Activated naive CD4-positive, alpha-beta T cell treated with anti-CD3 and anti-CD28 coated beads for 36 hours (primary cell): ENCODE measurements at regions of chr18 and their contacts with region 1.

Region 1: DNA sequence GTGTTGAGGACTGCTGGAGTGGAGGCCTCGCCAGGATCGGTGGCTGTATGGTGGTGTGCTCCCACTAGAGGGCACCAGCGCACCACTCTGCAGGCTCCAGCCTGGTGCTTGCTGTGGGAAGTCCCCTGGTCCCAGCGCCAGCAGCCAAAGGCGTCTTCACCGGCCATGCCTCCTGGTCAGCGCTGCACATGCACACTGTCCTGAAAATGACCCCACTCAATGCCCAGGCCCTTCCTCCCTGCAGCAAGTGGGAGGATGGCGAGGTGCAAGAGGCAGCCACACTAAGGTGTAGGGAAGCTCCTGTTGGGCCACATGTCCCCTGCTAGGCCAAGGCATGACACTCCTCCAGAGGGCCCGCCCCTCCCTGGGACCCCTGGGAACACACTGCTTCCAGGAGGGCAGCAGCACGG is 136.5 kb downstream of the CTIF start:
- DNase-seq: peak; percentile 87
- H3K4me3 Mint-ChIP-seq: no peak overlapping the region
- H3K27ac Mint-ChIP-seq: no peak overlapping the region
- H3K4me1 Mint-ChIP-seq: no peaks in the 10 kb centered on the region
- H3K27me3 Mint-ChIP-seq: no peaks in the 10 kb centered on the region

Region 2: DNA sequence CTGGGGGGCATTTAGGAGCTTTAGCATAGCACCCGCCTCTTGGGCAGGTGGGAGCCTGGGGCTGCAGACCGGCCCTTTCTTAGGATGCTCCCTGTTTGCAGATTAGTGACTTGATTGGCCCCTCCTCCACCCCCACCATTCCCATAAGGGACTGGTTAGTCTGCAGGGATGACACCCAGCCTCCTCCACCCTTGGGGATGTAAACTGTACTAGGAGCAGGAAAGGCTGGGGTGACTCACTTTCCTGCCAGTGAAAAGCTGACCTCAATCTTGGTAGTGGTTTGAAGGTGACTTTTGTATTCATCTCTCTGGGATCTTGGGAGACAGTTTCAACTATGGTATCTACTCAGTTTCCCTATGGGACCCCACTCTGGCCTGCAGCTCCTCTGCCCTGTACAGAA is 112.3 kb before region 1 on chr18:
- CTCF ChIA-PET with region 1: no interaction called
- intact Hi-C with region 1: no loop called
- DNase-seq: no peak
- H3K4me3 Mint-ChIP-seq: no peak overlapping the region
- H3K27ac Mint-ChIP-seq: no peak overlapping the region
- H3K4me1 Mint-ChIP-seq: no peaks in the 10 kb centered on the region
- H3K27me3 Mint-ChIP-seq: peaks cover 3% of the 10 kb centered on the region

Region 3: GRCh38 chr18:48600456-48601090 is 74.8 kb before region 1 on chr18:
- CTCF ChIA-PET with region 1: no interaction called
- intact Hi-C with region 1: no loop called
- DNase-seq: no peak
- H3K4me3 Mint-ChIP-seq: no peak overlapping the region
- H3K27ac Mint-ChIP-seq: no peak overlapping the region
- H3K4me1 Mint-ChIP-seq: no peaks in the 10 kb centered on the region
- H3K27me3 Mint-ChIP-seq: no peaks in the 10 kb centered on the region

Region 4: DNA sequence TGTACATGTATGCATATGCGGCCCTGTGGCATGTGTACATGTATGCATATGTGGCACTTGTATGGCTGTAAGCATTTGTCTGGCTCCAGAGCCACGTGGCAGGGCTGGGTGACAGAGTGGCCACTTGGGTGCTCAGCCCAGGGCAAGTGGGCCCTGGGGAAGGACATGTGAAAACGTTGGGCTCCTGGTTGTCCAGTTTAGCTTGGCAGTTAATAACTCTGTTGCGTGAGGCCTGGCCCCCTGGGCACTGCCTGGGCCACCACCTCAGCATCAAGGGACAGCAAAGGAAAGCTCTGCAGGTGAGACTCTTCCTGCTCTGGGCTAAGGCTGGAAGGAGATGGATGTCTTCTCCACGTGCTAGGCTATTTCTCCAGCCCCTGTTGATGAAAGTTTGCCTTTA is 16.6 kb before region 1 on chr18:
- CTCF ChIA-PET with region 1: no interaction called
- intact Hi-C with region 1: no loop called
- DNase-seq: no peak
- H3K4me3 Mint-ChIP-seq: no peak overlapping the region
- H3K27ac Mint-ChIP-seq: no peak overlapping the region
- H3K4me1 Mint-ChIP-seq: no peaks in the 10 kb centered on the region
- H3K27me3 Mint-ChIP-seq: no peaks in the 10 kb centered on the region

Region 5: GRCh38 chr18:48975649-48976204 is 300.4 kb after region 1 on chr18:
- CTCF ChIA-PET with region 1: no interaction called
- intact Hi-C with region 1: loop called (anchors 5 kb)
- DNase-seq: peak; percentile 63
- H3K4me3 Mint-ChIP-seq: peak overlapping the region; percentile 24
- H3K27ac Mint-ChIP-seq: no peak overlapping the region
- H3K4me1 Mint-ChIP-seq: peaks cover 5% of the 10 kb centered on the region
- H3K27me3 Mint-ChIP-seq: peaks cover 21% of the 10 kb centered on the region

Region 6: DNA sequence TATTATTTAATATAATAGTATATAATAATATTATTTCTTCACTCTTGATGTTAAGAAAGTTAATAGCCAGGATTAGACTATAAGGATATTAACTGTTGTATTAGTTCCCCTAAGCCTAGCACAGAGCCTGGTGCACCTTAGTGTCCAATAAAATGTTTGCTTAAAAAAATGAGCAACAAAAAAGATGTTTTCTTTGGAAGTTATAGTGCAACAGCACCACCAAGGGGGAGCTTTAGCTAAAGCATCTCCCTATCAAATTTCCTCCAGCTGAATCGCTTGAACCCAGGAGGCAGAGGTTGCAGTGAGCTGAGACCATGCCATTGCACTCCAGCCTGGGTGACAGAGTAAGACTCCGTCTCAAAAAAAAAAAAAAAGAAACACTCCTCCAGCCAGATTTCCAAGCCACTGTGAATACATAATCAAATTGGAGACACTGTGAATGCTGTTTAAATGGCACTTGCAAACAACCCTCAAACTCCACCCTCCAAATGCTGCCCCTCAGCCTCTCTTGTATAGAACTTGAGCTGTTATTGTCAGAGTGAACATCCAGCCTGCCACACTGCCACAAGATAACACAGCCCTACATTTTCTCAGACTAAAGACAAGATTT is 563.2 kb after region 1 on chr18:
- CTCF ChIA-PET with region 1: no interaction called
- intact Hi-C with region 1: loop called (anchors 1 kb)
- DNase-seq: no peak
- H3K4me3 Mint-ChIP-seq: no peak overlapping the region
- H3K27ac Mint-ChIP-seq: no peak overlapping the region
- H3K4me1 Mint-ChIP-seq: no peaks in the 10 kb centered on the region
- H3K27me3 Mint-ChIP-seq: no peaks in the 10 kb centered on the region

Region 7: DNA sequence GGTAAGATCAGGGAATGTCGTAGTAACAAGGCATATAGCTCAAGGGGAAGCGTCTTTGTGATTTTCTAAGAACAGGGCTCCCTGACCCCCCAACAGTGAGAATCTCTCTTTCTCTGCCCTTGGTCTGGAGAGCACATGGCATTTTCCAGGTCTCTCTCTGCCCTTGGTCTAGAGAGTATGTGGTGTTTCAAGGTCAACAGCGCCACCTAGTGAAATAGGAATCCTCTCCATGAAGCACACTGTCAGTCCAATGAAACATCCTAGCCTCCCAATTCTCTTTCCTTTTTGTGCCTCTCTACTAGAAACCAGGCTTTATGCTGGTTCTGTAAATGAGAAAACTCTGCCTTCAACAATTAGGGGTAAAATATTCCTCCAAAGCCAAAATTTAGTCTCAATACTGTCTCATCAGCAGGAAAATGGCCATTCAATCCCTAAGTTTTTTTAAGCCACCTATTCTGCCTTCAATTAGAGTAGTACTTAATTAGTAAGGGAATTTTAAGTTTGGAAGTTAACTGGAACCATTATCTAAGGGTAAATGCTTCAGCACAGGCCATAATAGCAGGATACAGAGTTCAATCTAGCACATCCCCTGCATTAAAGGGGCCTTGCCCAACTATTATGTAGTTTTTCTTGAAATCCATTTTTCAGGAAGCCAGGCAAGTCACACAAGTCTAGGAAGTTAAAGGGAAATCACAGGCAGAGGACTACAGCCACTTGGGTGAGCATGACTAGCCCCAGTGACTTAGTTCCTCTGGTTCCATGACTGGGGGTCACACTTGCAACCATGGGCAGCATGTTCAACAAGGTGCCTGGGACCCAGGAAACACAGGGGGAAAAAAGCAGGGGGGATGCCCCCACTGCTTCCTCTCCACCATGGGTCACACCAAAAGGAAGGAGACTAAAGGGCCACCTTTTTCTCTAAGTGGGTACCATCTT is 772.7 kb after region 1 on chr18:
- CTCF ChIA-PET with region 1: interaction called, 5 read pairs
- intact Hi-C with region 1: loop called (anchors 1 kb)
- DNase-seq: peak; percentile 53
- H3K4me3 Mint-ChIP-seq: no peak overlapping the region
- H3K27ac Mint-ChIP-seq: no peak overlapping the region
- H3K4me1 Mint-ChIP-seq: peaks cover 6% of the 10 kb centered on the region
- H3K27me3 Mint-ChIP-seq: no peaks in the 10 kb centered on the region

Region 8: DNA sequence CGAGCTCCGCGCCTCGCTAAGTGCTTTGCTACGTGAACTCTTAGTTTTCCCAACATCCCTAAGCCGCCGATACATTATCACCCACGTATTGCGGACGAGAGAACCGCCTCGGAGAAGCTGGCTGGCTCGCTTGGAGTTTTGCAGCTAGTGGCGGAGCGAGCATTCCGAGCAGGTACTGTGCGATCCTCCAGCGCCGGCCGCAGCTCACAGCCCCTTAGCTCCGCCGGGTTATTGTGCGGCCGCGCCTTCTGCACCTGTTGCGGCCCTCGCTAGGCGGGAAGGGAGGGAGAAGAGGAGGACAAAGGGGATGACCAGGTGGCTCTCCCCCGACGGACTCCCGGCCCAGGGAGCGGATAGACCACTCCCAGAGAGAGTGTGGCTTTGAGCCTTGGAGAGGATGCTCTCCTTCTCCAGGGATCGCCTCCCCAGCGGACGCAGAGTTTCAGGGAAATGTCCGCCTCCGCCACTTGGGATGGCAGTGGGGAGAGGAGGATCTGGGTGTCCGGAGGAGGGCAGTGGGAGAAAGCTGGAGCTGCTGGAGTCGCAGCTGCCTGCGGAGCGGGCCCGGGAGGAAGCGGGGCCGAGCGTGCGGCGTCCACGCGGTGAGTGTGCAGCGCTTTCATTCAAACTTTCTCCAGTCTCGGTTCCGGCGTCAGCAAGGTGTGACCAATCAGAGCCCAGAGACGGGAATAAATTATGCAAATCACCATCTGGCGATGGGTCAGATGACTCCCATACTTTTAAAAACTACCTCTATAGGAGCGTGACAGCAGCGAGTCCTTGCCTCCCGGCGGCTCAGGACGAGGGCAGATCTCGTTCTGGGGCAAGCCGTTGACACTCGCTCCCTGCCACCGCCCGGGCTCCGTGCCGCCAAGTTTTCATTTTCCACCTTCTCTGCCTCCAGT is 886.2 kb after region 1 on chr18 and contains the start of gene LIPG:
- CTCF ChIA-PET with region 1: no interaction called
- intact Hi-C with region 1: loop called (anchors 5 kb)
- DNase-seq: peak; percentile 76
- H3K4me3 Mint-ChIP-seq: peak within 1 kb of the TSS; percentile 66
- H3K27ac Mint-ChIP-seq: no peak within 1 kb of the TSS
- H3K4me1 Mint-ChIP-seq: peaks cover 31% of the 10 kb centered on the region
- H3K27me3 Mint-ChIP-seq: peaks cover 65% of the 10 kb centered on the region
- total RNA-seq, gene LIPG: 0.22 to 0.45 TPM

Region 9: DNA sequence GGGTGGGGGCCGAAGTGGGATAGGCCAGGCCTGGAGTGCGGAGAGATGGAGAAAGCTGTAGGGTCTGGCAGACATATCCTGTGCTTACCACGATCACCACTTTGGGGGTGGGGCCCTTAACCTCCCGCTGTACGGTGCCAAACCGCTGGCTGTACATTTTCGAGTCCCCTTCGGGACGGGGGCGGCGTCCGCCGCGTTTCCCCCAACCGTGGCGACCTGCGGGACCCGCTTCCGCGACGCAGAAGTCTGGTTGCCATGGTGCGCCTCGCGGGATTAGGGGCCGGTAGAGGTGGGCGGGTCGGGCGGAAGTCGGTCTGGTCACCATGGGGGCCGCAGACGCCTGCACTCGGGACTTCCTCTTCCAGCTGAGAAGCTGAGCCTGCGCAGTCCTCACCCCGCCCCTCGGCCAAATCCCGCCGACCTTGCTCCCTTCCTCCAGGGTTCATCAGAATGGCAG is 1590.9 kb after region 1 on chr18 and contains the start of gene CFAP53:
- CTCF ChIA-PET with region 1: no interaction called
- intact Hi-C with region 1: loop called (anchors 10 kb)
- DNase-seq: peak; percentile 90
- H3K4me3 Mint-ChIP-seq: peak within 1 kb of the TSS; percentile 76
- H3K27ac Mint-ChIP-seq: no peak within 1 kb of the TSS
- H3K4me1 Mint-ChIP-seq: peaks cover 16% of the 10 kb centered on the region
- H3K27me3 Mint-ChIP-seq: no peaks in the 10 kb centered on the region
- total RNA-seq, gene CFAP53: 0.40 to 0.43 TPM